ENCODE measurements at regions of chr11 and their contacts with region 1.

Region 1: GRCh38 chr11:86477495-86478155 is 102.9 kb downstream of the CCDC81 start:
- DNase-seq: no peak
- ATAC-seq: no peak
- H3K4me3 ChIP-seq: no peak overlapping the region
- H3K27ac ChIP-seq: no peak overlapping the region
- H3K4me1 ChIP-seq: peaks cover 6 to 20% of the 10 kb centered on the region in 2 experiments; a peak in 2 of 4 replicates
- H3K27me3 ChIP-seq: no peaks in the 10 kb centered on the region
- CTCF ChIP-seq: no peak
- POLR2A ChIP-seq: no peak
- RAD21 ChIP-seq: no peak

Region 2: GRCh38 chr11:86577663-86578636 is 100.3 kb after region 1 on chr11:
- CTCF ChIA-PET with region 1: no interaction called
- POLR2A ChIA-PET with region 1: no interaction called
- RAD21 ChIA-PET with region 1: no interaction called
- intact Hi-C with region 1: loop called (anchors 5 kb)
- DNase-seq: peak; percentile 58
- ATAC-seq: peak; percentile 76
- H3K4me3 ChIP-seq: peak overlapping the region in 1 of 2 experiments; percentile 29; a peak in 2 of 4 replicates
- H3K27ac ChIP-seq: peak overlapping the region; percentile 36; the same call in 1 of the 2 replicates
- H3K4me1 ChIP-seq: peaks cover 17 to 34% of the 10 kb centered on the region in 2 experiments
- H3K27me3 ChIP-seq: no peaks in the 10 kb centered on the region; the same call in 1 of the 2 replicates
- CTCF ChIP-seq: no peak
- POLR2A ChIP-seq: no peak
- RAD21 ChIP-seq: no peak

Measured in HCT116 (cell line).